ENCODE measurements at regions of chr13 and their contacts with region 1.

Region 1: GRCh38 chr13:19998960-19999359 is 40.4 kb downstream of the ZMYM2 start:
- H3K4me3 ChIP-seq: no peak overlapping the region
- H3K27ac ChIP-seq: no peak overlapping the region
- H3K4me1 ChIP-seq: peaks cover 7% of the 10 kb centered on the region; the same call in 1 of the 2 replicates
- CTCF ChIP-seq: no peak

Region 2: GRCh38 chr13:19984430-19985218 is 14.3 kb before region 1 on chr13:
- CTCF ChIA-PET with region 1: interaction called, 10 read pairs
- POLR2A ChIA-PET with region 1: interaction called, 3 read pairs
- H3K4me3 ChIP-seq: no peak overlapping the region
- H3K27ac ChIP-seq: no peak overlapping the region
- H3K4me1 ChIP-seq: no peaks in the 10 kb centered on the region
- CTCF ChIP-seq: no peak

Region 3: GRCh38 chr13:20182231-20182846 is 183.4 kb after region 1 on chr13:
- CTCF ChIA-PET with region 1: no interaction called
- POLR2A ChIA-PET with region 1: no interaction called
- H3K4me3 ChIP-seq: no peak overlapping the region
- H3K27ac ChIP-seq: no peak overlapping the region
- H3K4me1 ChIP-seq: no peaks in the 10 kb centered on the region
- CTCF ChIP-seq: no peak; the same call in 1 of the 2 replicates

Measured in HEK293 (cell line).